ENCODE measurements at regions of chr7 and their contacts with region 1.

Region 1: DNA sequence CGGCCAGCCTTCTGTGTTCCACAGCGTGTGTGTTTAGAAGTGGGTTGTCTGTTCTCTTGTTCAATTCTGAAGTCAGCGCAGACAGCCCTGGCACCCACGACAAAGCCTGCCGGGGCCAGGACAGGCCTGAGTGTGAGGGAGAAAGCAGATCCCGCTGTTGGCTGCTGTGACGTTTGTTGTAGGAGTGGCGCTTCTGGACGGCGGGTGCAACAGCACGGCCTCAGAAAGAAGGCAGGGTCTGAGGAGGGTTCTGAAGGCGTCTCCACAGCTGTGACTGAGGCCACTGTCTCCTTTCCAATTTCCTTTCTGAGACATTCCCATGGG is 76.2 kb downstream of the VIPR2 start:
- DNase-seq: peak; percentile 87 to 95 (median 94)
- ATAC-seq: peak; percentile 91 to 93
- H3K4me3 ChIP-seq: no peak overlapping the region
- H3K27ac ChIP-seq: peak overlapping the region; percentile 40
- H3K4me1 ChIP-seq: peaks cover 4% of the 10 kb centered on the region
- H3K27me3 ChIP-seq: no peaks in the 10 kb centered on the region

Region 2: DNA sequence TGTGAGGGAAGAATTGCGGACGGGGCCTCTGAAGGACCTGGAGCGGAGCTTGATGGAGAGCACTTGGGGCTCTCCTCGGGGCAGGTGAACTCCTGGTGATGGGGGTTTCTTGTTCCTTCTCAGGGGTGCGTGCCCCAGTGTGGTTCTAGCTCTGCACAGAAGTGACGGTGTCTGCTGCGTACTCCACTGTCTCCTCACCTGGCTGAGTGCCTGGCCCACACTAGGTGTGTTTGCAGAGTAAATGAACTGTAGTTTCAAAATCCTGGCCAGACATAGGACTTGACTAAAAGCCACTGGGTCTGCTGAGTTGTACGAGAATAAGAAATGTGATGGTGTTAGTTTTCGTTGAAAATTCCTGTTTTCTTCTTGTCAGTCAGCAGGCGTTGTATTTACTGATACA is 176.5 kb before region 1 on chr7:
- intact Hi-C with region 1: no loop called
- DNase-seq: no peak
- ATAC-seq: no peak
- H3K4me3 ChIP-seq: no peak overlapping the region
- H3K27ac ChIP-seq: no peak overlapping the region
- H3K4me1 ChIP-seq: no peaks in the 10 kb centered on the region
- H3K27me3 ChIP-seq: no peaks in the 10 kb centered on the region

Region 3: GRCh38 chr7:159115601-159116501 is 47.4 kb after region 1 on chr7:
- intact Hi-C with region 1: loop called in 1 of 4 experiments (anchors 10 kb)
- DNase-seq: peak in 1 of 3 donors; percentile 38
- ATAC-seq: peak in 1 of 2 donors; percentile 24
- H3K4me3 ChIP-seq: no peak overlapping the region
- H3K27ac ChIP-seq: no peak overlapping the region
- H3K4me1 ChIP-seq: peaks cover 2% of the 10 kb centered on the region
- H3K27me3 ChIP-seq: no peaks in the 10 kb centered on the region

Region 4: GRCh38 chr7:159143780-159144757 is 75.6 kb after region 1 on chr7:
- intact Hi-C with region 1: no loop called
- DNase-seq: peak; percentile 56 to 80 (median 80)
- ATAC-seq: peak; percentile 61
- H3K4me3 ChIP-seq: peak overlapping the region; percentile 79
- H3K27ac ChIP-seq: no peak overlapping the region
- H3K4me1 ChIP-seq: no peaks in the 10 kb centered on the region
- H3K27me3 ChIP-seq: no peaks in the 10 kb centered on the region